IMR-90 (cell line): ENCODE measurements at regions of chr11 and their contacts with region 1.

Region 1: GRCh38 chr11:126194121-126194543 is 17.3 kb downstream of the RPUSD4 start:
- DNase-seq: peak; percentile 59
- ATAC-seq: peak; percentile 96
- H3K4me3 ChIP-seq: no peak overlapping the region
- H3K27ac ChIP-seq: no peak overlapping the region
- H3K4me1 ChIP-seq: no peaks in the 10 kb centered on the region
- H3K27me3 ChIP-seq: no peaks in the 10 kb centered on the region
- CTCF ChIP-seq: peak; percentile 83
- POLR2A ChIP-seq: 0 out of 2 replicates have a peak, but pooled peaks have one; percentile 40
- RAD21 ChIP-seq: peak; percentile 96

Region 2: GRCh38 chr11:125923012-125923579 is 271.0 kb before region 1 on chr11:
- CTCF ChIA-PET with region 1: interaction called, 6 read pairs
- POLR2A ChIA-PET with region 1: no interaction called
- dilution Hi-C with region 1: no loop called
- in situ Hi-C with region 1: loop called (anchors 5 kb)
- intact Hi-C with region 1: loop called (anchors 1 kb)
- DNase-seq: peak; percentile 68
- ATAC-seq: peak; percentile 77
- H3K4me3 ChIP-seq: no peak overlapping the region
- H3K27ac ChIP-seq: no peak overlapping the region
- H3K4me1 ChIP-seq: no peaks in the 10 kb centered on the region
- H3K27me3 ChIP-seq: peaks cover 41% of the 10 kb centered on the region
- CTCF ChIP-seq: peak; percentile 83
- POLR2A ChIP-seq: no peak
- RAD21 ChIP-seq: peak; percentile 93

Region 3: DNA sequence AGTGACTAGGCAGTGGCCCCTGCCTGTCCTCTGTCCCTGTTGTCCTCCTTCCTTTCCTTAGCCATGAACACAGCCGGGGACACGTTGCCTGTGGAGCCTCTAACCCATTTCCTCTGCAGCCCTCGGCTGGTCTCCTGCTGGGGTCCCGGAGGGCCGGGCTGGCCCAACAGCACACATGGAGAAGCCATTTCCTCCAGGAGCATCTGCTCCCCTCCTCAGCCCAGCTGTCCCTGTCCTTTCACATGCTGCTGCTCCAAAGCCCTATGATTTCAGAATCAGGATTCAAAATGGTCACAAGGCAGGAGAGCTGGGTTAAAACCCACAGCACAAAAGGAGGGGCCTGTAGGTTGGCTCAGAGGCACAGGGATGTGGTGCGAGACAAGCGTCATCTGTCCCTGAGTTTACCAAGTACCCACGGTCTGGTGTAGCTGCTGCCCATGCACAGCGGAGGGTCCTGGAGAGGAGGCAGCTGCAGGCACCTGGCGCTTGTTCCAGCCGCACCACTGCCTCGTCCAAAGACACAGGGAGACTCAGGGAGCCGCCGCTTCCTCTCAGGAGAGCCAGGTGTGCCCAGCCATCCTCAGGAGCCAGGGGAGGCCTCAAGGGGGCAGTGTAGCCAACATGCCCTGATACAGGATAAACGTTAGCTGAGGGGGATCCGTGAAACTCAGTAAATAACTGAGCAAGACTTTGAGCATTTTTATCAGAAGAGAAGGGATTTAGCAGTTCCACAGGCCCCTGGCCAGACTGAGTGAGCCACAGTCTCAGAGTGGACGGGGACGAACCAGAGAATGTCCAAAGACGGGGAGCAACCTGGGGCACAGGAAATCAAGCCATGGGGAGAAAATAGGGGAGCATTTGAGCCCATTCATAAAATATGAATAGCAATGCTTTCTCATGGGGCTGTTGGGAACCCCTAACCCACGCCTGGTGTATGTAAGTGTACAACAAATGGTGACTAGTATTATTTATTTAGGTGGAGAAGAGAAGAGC is 252.2 kb before region 1 on chr11:
- CTCF ChIA-PET with region 1: interaction called, 3 read pairs
- POLR2A ChIA-PET with region 1: no interaction called
- dilution Hi-C with region 1: no loop called
- in situ Hi-C with region 1: no loop called
- intact Hi-C with region 1: loop called (anchors 1 kb)
- DNase-seq: peak; percentile 19
- ATAC-seq: peak; percentile 65; the same call in 1 of the 2 replicates
- H3K4me3 ChIP-seq: no peak overlapping the region
- H3K27ac ChIP-seq: no peak overlapping the region
- H3K4me1 ChIP-seq: no peaks in the 10 kb centered on the region
- H3K27me3 ChIP-seq: peaks cover 17% of the 10 kb centered on the region; the same call in 1 of the 2 replicates
- CTCF ChIP-seq: peak; percentile 57
- POLR2A ChIP-seq: no peak
- RAD21 ChIP-seq: peak; percentile 55

Region 4: DNA sequence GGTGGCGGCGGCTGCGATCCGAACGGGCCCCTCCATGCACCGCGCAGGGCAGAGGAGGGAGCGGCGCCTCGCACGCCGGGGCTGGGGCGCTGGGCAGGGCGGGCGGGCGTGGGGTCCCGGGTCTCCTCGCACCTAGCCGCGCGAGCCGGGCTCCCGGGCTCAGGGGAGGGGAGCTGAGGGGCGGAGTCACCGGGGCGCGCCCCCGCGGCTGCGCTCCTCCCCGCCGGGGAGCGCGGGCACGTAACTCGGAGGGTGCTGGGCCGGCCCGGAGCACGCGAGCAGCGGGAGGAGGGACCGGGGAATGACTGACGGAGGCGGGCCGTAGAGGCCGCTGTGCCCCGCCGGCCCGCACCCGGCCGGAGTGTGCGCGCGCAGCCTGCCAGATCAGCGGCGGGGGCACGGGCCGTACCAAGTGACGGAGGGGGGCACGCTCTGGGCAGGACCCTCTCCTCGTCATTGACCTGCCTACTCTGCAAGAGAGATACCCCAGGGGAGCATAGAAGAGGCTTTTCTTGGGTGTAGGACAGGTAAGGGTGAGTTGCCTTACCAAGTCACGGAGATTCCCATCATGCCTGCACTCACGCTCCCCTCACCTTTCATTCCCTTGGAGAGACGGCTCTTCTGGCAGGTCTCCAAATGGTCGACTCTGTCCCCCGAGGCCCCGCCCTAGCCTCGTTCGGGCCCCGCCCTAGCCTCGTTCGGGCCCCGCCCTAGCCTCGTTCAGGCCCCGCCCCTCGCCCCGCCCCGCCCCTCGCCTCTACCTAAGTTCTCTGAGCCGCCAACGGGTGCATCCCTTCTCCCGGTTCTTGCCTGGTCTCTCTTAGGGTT is 131.2 kb before region 1 on chr11 and contains the start of gene CDON:
- CTCF ChIA-PET with region 1: interaction called, 3 read pairs
- POLR2A ChIA-PET with region 1: no interaction called
- dilution Hi-C with region 1: no loop called
- in situ Hi-C with region 1: no loop called
- intact Hi-C with region 1: loop called (anchors 5 kb)
- DNase-seq: peak; percentile 87
- ATAC-seq: peak; percentile 99
- H3K4me3 ChIP-seq: peak within 1 kb of the TSS; percentile 61
- H3K27ac ChIP-seq: peak within 1 kb of the TSS; percentile 74
- H3K4me1 ChIP-seq: no peaks in the 10 kb centered on the region
- H3K27me3 ChIP-seq: peaks cover 24% of the 10 kb centered on the region
- CTCF ChIP-seq: peak; percentile 29; the same call in 1 of the 2 replicates
- POLR2A ChIP-seq: no peak
- RAD21 ChIP-seq: 0 out of 2 replicates have a peak, but pooled peaks have one; percentile 10
- total RNA-seq, gene CDON: 2.2 and 3.8 TPM in 2 replicates